Activated CD4-positive, alpha-beta T cell treated with anti-CD3 and anti-CD28 coated beads for 36 hours (primary cell): ENCODE measurements at regions of chr2 and their contacts with region 1.

Region 1: GRCh38 chr2:98134172-98135005 is 47.4 kb downstream of the VWA3B start:
- DNase-seq: peak; percentile 84
- ATAC-seq: peak; percentile 98
- H3K4me3 Mint-ChIP-seq: peak overlapping the region; percentile 27
- H3K27ac Mint-ChIP-seq: peak overlapping the region; percentile 84
- H3K4me1 Mint-ChIP-seq: peaks cover 26% of the 10 kb centered on the region
- H3K27me3 Mint-ChIP-seq: peaks cover 10% of the 10 kb centered on the region

Region 2: GRCh38 chr2:98012561-98012991 is 121.8 kb before region 1 on chr2:
- CTCF ChIA-PET with region 1: interaction called, 3 read pairs
- POLR2A ChIA-PET with region 1: no interaction called
- intact Hi-C with region 1: loop called in 1 of 2 experiments (anchors 1 kb)
- DNase-seq: peak; percentile 81
- ATAC-seq: peak; percentile 83
- H3K4me3 Mint-ChIP-seq: no peak overlapping the region
- H3K27ac Mint-ChIP-seq: peak overlapping the region; percentile 61
- H3K4me1 Mint-ChIP-seq: peaks cover 33% of the 10 kb centered on the region
- H3K27me3 Mint-ChIP-seq: peaks cover 9% of the 10 kb centered on the region

Region 3: DNA sequence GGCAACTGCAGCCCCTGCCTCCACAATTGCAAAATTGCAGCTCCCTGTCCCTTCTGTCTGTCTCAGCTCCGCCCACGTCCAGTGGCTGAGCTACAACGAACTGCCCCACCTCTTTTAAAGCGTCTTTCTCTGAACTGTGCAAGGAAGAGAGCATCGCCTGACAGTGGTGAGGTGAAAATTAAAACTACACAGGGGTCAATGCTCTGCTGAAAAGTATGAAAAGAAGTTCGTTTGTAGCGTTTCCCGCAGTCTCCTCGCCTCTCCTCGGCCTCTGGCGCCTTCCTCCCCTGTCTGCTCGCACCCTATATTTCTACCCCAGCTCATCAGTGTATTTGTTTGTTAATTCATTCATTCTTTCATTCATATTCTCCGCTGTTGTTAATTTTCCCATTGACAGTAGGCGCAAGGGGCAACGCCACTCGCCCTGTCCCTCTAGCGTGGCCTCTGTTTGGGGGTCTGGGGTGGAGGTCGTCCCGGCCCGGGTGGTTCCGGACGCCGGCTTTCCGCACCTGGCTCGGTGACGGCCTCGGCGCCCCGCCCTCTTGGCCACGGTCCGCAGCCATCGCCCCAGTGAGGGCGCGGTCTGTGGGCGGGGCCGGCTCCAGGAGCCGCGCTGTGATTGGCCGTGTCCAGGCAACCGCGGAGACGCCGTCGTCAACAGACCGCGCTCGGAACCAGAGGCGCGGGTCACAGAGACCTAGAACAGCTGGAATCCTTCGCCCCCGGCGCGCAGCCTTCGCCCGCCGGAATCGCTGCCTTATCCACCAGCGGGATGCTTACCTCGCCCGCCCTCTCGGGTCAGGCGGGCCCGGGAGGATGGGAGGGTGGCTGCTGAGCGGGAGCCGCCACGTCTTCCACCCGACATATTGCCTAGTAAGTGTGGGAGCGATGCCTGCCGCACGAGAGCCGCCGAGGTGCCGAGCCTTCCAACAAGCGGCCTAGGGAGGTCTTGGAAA is 47.6 kb before region 1 on chr2 and contains the start of gene VWA3B:
- CTCF ChIA-PET with region 1: no interaction called
- POLR2A ChIA-PET with region 1: no interaction called
- intact Hi-C with region 1: loop called in 1 of 2 experiments (anchors 1 kb)
- DNase-seq: peak; percentile 76
- ATAC-seq: peak; percentile 89
- H3K4me3 Mint-ChIP-seq: peak within 1 kb of the TSS; percentile 47
- H3K27ac Mint-ChIP-seq: peak within 1 kb of the TSS; percentile 53
- H3K4me1 Mint-ChIP-seq: peaks cover 17% of the 10 kb centered on the region
- H3K27me3 Mint-ChIP-seq: peaks cover 44% of the 10 kb centered on the region
- total RNA-seq, gene VWA3B: not detected

Region 4: GRCh38 chr2:98778741-98779483 is 644.5 kb after region 1 on chr2:
- CTCF ChIA-PET with region 1: no interaction called
- POLR2A ChIA-PET with region 1: interaction called, 12 read pairs
- intact Hi-C with region 1: no loop called
- DNase-seq: no peak
- ATAC-seq: no peak
- H3K4me3 Mint-ChIP-seq: no peak overlapping the region
- H3K27ac Mint-ChIP-seq: no peak overlapping the region
- H3K4me1 Mint-ChIP-seq: peaks cover 5% of the 10 kb centered on the region
- H3K27me3 Mint-ChIP-seq: no peaks in the 10 kb centered on the region